MCF 10A (cell line): ENCODE measurements at regions of chr14 and their contacts with region 1.

Region 1: GRCh38 chr14:36070031-36070719 is 106.3 kb downstream of the PTCSC3 start:
- DNase-seq: peak; percentile 79
- H3K4me3 Mint-ChIP-seq: peak overlapping the region; percentile 37
- H3K27ac Mint-ChIP-seq: peak overlapping the region; percentile 92
- H3K4me1 Mint-ChIP-seq: peaks cover 10% of the 10 kb centered on the region
- H3K27me3 Mint-ChIP-seq: no peaks in the 10 kb centered on the region
- CTCF ChIP-seq: peak; percentile 82

Region 2: GRCh38 chr14:35911097-35911496 is 159.1 kb before region 1 on chr14:
- CTCF ChIA-PET with region 1: no interaction called
- POLR2A ChIA-PET with region 1: no interaction called
- intact Hi-C with region 1: no loop called
- DNase-seq: no peak
- H3K4me3 Mint-ChIP-seq: no peak overlapping the region
- H3K27ac Mint-ChIP-seq: no peak overlapping the region
- H3K4me1 Mint-ChIP-seq: no peaks in the 10 kb centered on the region
- H3K27me3 Mint-ChIP-seq: no peaks in the 10 kb centered on the region
- CTCF ChIP-seq: no peak

Region 3: GRCh38 chr14:35963209-35963608 is 107.0 kb before region 1 on chr14:
- CTCF ChIA-PET with region 1: interaction called, 18 read pairs
- POLR2A ChIA-PET with region 1: no interaction called
- intact Hi-C with region 1: loop called (anchors 1 kb)
- DNase-seq: peak; percentile 32
- H3K4me3 Mint-ChIP-seq: no peak overlapping the region
- H3K27ac Mint-ChIP-seq: no peak overlapping the region
- H3K4me1 Mint-ChIP-seq: no peaks in the 10 kb centered on the region
- H3K27me3 Mint-ChIP-seq: no peaks in the 10 kb centered on the region
- CTCF ChIP-seq: peak; percentile 21

Region 4: GRCh38 chr14:36021030-36021422 is 49.1 kb before region 1 on chr14:
- CTCF ChIA-PET with region 1: no interaction called
- POLR2A ChIA-PET with region 1: no interaction called
- intact Hi-C with region 1: no loop called
- DNase-seq: no peak
- H3K4me3 Mint-ChIP-seq: no peak overlapping the region
- H3K27ac Mint-ChIP-seq: no peak overlapping the region
- H3K4me1 Mint-ChIP-seq: no peaks in the 10 kb centered on the region
- H3K27me3 Mint-ChIP-seq: no peaks in the 10 kb centered on the region
- CTCF ChIP-seq: no peak

Region 5: DNA sequence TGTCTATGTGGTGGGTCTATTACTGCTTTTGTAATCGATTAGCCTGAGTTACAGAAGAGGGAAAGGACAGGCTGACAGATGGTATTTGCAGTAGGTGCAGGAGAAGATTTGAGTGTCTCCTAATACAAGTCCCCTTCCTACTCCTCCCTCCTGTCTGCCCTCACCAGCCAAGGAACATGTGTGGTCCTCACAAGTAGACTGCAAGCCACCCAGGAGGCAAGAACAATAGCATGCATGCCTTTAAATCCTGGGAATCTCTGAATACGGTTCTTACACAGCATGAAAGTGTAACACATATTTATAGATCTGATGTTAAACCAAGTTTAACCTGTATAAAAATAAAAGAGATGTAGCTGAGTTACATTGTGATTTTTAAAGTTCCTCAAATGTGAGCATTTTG is 10.6 kb before region 1 on chr14:
- CTCF ChIA-PET with region 1: interaction called, 39 read pairs
- POLR2A ChIA-PET with region 1: interaction called, 6 read pairs
- intact Hi-C with region 1: no loop called
- DNase-seq: no peak
- H3K4me3 Mint-ChIP-seq: no peak overlapping the region
- H3K27ac Mint-ChIP-seq: no peak overlapping the region
- H3K4me1 Mint-ChIP-seq: peaks cover 26% of the 10 kb centered on the region
- H3K27me3 Mint-ChIP-seq: no peaks in the 10 kb centered on the region
- CTCF ChIP-seq: no peak

Region 6: GRCh38 chr14:36105401-36105800 is 35.2 kb after region 1 on chr14:
- CTCF ChIA-PET with region 1: interaction called, 16 read pairs
- POLR2A ChIA-PET with region 1: no interaction called
- intact Hi-C with region 1: no loop called
- DNase-seq: peak; percentile 58
- H3K4me3 Mint-ChIP-seq: no peak overlapping the region
- H3K27ac Mint-ChIP-seq: no peak overlapping the region
- H3K4me1 Mint-ChIP-seq: no peaks in the 10 kb centered on the region
- H3K27me3 Mint-ChIP-seq: peaks cover 2% of the 10 kb centered on the region
- CTCF ChIP-seq: no peak

Region 7: GRCh38 chr14:36361210-36361853 is 291.2 kb after region 1 on chr14:
- CTCF ChIA-PET with region 1: interaction called, 21 read pairs
- POLR2A ChIA-PET with region 1: no interaction called
- intact Hi-C with region 1: no loop called
- DNase-seq: no peak
- H3K4me3 Mint-ChIP-seq: no peak overlapping the region
- H3K27ac Mint-ChIP-seq: no peak overlapping the region
- H3K4me1 Mint-ChIP-seq: no peaks in the 10 kb centered on the region
- H3K27me3 Mint-ChIP-seq: no peaks in the 10 kb centered on the region
- CTCF ChIP-seq: no peak

Region 8: DNA sequence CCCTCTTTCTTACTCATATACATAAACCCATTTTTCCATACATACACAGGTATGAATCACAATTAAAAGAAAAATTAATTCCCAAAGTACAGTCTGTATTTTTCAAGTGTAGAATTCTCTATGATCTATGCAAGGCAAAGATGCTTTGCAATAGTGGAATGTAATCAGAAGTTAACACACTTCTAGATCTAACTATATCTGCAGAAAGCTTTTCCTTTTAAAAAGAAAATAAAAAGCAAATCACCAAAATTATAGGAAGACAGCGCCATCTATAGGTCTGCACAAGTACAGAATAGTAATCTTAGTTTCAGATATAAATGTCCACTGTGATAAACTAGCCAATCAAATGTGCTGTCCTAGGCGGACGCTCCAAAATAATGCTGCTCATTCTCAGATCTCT is 1080.2 kb after region 1 on chr14:
- CTCF ChIA-PET with region 1: interaction called, 13 read pairs
- POLR2A ChIA-PET with region 1: no interaction called
- intact Hi-C with region 1: no loop called
- DNase-seq: peak; percentile 63
- H3K4me3 Mint-ChIP-seq: no peak overlapping the region
- H3K27ac Mint-ChIP-seq: peak overlapping the region; percentile 16
- H3K4me1 Mint-ChIP-seq: peaks cover 14% of the 10 kb centered on the region
- H3K27me3 Mint-ChIP-seq: no peaks in the 10 kb centered on the region
- CTCF ChIP-seq: peak; percentile 54